Dorsolateral prefrontal cortex (tissue), 120 donors: ENCODE measurements at regions of chr18 and their contacts with region 1.

Region 1: GRCh38 chr18:12990967-12991838 is at the start of gene CEP192:
- DNase-seq: peak; percentile 93 to 99 (median 98)
- H3K4me3 ChIP-seq: peak within 1 kb of the TSS; percentile 75 to 100 (median 92)
- H3K27ac ChIP-seq: peak within 1 kb of the TSS in 57 of 59 donors; percentile 41 to 94 (median 84)
- H3K27me3 ChIP-seq: no peaks in the 10 kb centered on the region
- CTCF ChIP-seq: peak in 46 of 56 donors; percentile 5 to 62 (median 38)
- total RNA-seq, gene CEP192: 31.3 to 63.5 (median 47.2) TPM

Region 2: DNA sequence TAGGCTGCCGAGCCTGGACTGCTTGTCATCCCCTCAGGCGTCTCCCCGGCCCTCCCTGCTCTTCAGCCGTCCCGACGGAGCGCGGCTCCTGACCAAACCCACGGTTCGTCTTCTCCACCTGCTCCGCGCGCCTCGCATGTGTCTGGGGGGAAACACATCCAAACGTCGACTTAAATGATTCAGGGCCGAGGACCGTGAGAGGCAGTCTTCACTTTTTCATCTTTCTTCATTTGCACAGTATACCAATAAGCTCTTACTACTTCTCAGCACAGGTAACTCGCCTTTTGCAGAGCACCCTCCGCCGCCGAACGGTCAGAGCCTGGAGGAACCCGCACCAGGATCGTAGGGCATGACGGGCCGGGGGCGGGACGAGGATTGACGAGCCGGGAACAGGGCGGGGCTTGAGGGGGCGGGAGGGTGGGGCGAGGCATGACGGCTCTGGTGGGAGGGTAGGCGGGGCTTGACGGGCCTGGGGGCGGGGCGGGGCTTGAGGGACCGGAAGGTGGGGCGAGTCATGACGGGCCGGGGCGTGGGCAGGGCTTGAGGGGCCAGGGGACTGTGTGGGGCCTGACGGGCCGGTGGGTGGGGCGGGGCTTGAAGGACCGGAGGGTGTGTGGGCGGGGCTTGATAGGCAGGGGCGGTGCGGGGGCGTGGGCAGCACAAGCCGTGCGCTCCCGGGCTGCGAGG is 43.7 kb before region 1 on chr18 and contains the start of gene SEH1L:
- intact Hi-C with region 1: loop called (anchors 2 kb)
- DNase-seq: peak; percentile 97 to 100 (median 98)
- H3K4me3 ChIP-seq: peak within 1 kb of the TSS; percentile 65 to 99 (median 84)
- H3K27ac ChIP-seq: peak within 1 kb of the TSS; percentile 70 to 99 (median 95)
- H3K27me3 ChIP-seq: no peaks in the 10 kb centered on the region
- CTCF ChIP-seq: peak in 1 of 56 donors; percentile 3
- total RNA-seq, gene SEH1L: 28.6 to 78.9 (median 56.1) TPM

Region 3: DNA sequence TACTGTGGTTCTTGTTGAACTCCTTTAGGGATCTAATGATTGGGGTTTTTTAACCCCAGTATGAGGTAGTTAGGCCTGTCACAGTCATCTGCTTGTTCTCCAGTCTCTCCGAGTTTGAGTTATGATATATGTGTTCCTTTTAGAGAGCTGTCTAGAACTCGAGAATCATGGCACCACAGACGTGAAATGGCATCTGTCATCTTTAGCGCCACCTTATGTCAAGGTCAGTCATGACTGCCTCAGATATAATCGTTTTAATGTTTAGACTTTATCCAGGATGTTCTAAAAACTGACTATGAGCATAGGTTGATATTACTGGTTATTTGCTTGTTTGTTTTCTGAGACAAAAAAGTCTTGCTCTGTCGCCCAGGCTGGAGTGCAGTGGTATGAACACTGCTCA is 112.2 kb after region 1 on chr18:
- intact Hi-C with region 1: no loop called
- DNase-seq: no peak
- H3K4me3 ChIP-seq: no peak overlapping the region
- H3K27ac ChIP-seq: no peak overlapping the region
- H3K27me3 ChIP-seq: no peaks in the 10 kb centered on the region
- CTCF ChIP-seq: peak in 2 of 56 donors; percentile 9 to 13

Region 4: GRCh38 chr18:13359210-13359609 is 368.0 kb after region 1 on chr18:
- intact Hi-C with region 1: no loop called
- DNase-seq: no peak
- H3K4me3 ChIP-seq: no peak overlapping the region
- H3K27ac ChIP-seq: no peak overlapping the region
- H3K27me3 ChIP-seq: no peaks in the 10 kb centered on the region
- CTCF ChIP-seq: no peak

Region 5: DNA sequence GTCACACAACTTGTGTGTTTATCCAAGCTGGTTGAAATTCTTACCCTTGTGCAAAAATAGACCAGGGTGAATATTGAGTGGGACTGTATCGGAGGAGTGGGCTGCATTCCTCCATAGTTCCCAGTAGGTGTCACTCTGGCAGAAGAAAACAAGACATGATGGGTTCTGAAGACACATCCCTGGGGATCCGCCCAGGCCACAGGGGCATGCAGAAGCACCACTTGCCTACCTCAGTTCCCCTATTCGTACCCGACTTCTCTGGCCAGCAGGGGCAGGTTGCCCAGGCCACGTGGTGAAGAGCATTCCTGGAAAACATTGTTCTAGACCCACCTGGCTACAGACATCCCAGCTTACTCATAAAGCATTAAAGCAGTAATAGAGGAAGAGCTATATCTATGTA is 566.9 kb after region 1 on chr18:
- intact Hi-C with region 1: loop called in 1 of 2 experiments (anchors 10 kb)
- DNase-seq: peak in 5 of 10 donors; percentile 56 to 72 (median 69)
- H3K4me3 ChIP-seq: peak overlapping the region in 3 of 59 donors; percentile 7 to 35 (median 10)
- H3K27ac ChIP-seq: peak overlapping the region in 54 of 59 donors; percentile 8 to 100 (median 86)
- H3K27me3 ChIP-seq: no peaks in the 10 kb centered on the region
- CTCF ChIP-seq: peak; percentile 52 to 90 (median 78)